Heart right ventricle (tissue), 16 donors: ENCODE measurements at regions of chr7 and their contacts with region 1.

Region 1: GRCh38 chr7:86592185-86592584 is 51.5 kb upstream of the GRM3 start:
- DNase-seq: no peak
- ATAC-seq: no peak
- H3K4me3 ChIP-seq: no peak overlapping the region
- H3K27ac ChIP-seq: no peak overlapping the region
- H3K4me1 ChIP-seq: no peaks in the 10 kb centered on the region
- H3K27me3 ChIP-seq: no peaks in the 10 kb centered on the region
- CTCF ChIP-seq: no peak

Region 2: DNA sequence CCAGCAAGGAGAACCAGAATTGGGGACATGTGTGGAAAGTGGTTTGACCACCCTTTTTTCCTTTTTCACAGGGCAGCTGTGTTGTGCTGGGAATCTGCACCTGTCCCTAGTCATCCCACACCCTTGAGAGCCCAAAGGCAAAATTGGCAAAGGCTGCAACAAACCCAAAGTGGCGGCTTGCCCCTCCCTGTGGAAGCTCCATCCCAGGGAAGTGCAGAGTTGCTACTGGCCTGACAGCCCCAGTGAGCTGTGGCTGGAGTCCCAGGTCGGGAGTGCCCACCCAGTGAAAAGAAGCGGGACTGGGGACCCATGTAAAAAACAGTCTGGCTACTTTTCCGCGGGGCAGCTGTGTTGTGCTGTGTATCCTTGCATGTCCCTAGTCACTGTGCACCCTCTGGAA is 57.5 kb before region 1 on chr7:
- intact Hi-C with region 1: loop called in 1 of 10 experiments (anchors 2 kb)
- DNase-seq: no peak
- ATAC-seq: no peak
- H3K4me3 ChIP-seq: no peak overlapping the region
- H3K27ac ChIP-seq: no peak overlapping the region
- H3K4me1 ChIP-seq: no peaks in the 10 kb centered on the region
- H3K27me3 ChIP-seq: no peaks in the 10 kb centered on the region
- CTCF ChIP-seq: no peak